PC-3 (cell line): ENCODE measurements at regions of chr5 and their contacts with region 1.

Region 1: DNA sequence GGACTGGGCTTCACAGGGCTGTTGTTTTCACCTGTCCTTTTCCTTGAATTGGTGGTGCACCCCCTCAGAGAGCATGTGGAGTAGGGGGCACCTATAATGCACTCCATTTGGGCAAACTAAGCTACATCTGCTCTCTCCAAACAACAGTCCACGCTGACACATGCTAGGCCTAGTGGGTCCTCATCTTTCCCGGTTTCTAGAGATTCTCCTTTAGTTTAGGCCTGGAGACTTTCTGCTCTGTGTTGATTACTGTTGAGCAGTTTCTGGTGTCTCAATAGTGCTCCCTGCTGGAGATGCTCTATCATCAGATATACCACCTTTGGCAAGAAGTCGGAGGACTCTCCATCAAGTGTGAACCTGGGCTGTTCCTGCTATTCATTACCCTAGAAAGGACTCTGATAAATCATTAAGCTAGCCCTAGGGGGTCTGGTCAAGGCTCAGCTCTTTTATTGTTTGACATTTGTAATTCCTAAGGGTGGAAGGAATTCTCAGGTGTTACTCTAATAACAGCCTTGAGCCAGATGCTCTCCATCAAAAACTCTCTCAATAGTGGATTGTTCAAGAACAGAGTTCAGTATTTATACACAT is 64.0 kb upstream of the FYB1 start:
- DNase-seq: peak; percentile 90
- ATAC-seq: peak; percentile 97
- H3K4me3 ChIP-seq: no peak overlapping the region
- H3K27ac ChIP-seq: no peak overlapping the region
- H3K4me1 ChIP-seq: peaks cover 7% of the 10 kb centered on the region
- H3K27me3 ChIP-seq: no peaks in the 10 kb centered on the region
- CTCF ChIP-seq: peak; percentile 94

Region 2: DNA sequence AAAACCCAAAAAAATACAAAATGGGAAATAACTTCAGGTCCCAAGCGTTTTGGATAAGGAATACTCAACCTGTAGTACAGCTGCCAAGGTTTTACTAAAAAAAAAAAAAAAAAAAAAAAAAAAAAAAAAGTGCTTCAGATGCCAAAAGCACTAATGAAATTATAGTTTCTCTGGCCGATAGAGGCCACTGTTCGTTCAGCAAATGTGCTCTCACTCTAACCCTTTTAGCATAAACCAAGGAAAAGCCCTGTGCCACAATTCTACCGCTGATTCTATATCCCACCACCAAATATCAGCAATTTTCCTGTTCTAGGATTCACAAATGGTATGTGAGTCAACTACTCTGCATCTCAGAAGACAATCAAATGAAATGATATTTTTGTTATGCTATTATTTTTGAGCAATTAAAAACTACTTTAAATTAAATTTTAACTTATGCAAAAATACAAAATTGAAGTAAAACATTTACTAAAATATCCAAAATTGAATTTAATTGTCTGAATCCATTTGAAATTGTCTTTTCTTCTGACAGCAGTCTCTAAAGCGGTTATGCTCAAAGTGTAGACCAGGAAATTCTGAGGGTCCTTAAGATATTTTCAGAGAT is 288.9 kb before region 1 on chr5:
- CTCF ChIA-PET with region 1: no interaction called
- POLR2A ChIA-PET with region 1: no interaction called
- intact Hi-C with region 1: loop called (anchors 2 kb)
- DNase-seq: peak; percentile 89
- ATAC-seq: peak; percentile 78
- H3K4me3 ChIP-seq: no peak overlapping the region
- H3K27ac ChIP-seq: no peak overlapping the region
- H3K4me1 ChIP-seq: no peaks in the 10 kb centered on the region
- H3K27me3 ChIP-seq: no peaks in the 10 kb centered on the region
- CTCF ChIP-seq: peak; percentile 82

Region 3: GRCh38 chr5:39217365-39218281 is 65.7 kb before region 1 on chr5:
- CTCF ChIA-PET with region 1: interaction called, 21 read pairs
- POLR2A ChIA-PET with region 1: no interaction called
- intact Hi-C with region 1: loop called (anchors 1 kb)
- DNase-seq: peak; percentile 95
- ATAC-seq: peak; percentile 39; the same call in 1 of the 2 replicates
- H3K4me3 ChIP-seq: no peak overlapping the region
- H3K27ac ChIP-seq: no peak overlapping the region
- H3K4me1 ChIP-seq: peaks cover 25% of the 10 kb centered on the region
- H3K27me3 ChIP-seq: no peaks in the 10 kb centered on the region
- CTCF ChIP-seq: peak; percentile 99